Activated naive CD4-positive, alpha-beta T cell treated with anti-CD3 and anti-CD28 coated beads for 36 hours (primary cell): ENCODE measurements at regions of chr7 and their contacts with region 1.

Region 1: DNA sequence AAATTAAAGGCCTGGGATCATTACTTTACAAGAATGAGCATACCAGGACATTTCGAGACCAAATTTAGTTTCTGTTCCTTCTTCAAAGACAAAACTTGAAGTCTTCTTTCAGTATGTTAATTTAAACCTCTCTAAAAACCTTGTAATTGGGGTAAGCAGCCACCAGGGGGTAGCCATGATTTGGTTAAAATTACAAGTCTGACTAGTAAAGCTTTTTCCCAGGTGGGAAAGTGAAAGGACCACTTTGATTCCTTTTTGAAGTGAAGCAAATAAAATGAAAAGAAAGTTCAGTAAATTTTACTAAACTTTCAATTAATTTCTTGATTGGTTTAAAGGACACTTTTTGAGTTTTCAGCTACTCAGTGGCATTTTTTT is 294.3 kb downstream of the BBS9 start:
- DNase-seq: peak; percentile 39
- H3K4me3 Mint-ChIP-seq: no peak overlapping the region
- H3K27ac Mint-ChIP-seq: no peak overlapping the region
- H3K4me1 Mint-ChIP-seq: no peaks in the 10 kb centered on the region
- H3K27me3 Mint-ChIP-seq: no peaks in the 10 kb centered on the region

Region 2: DNA sequence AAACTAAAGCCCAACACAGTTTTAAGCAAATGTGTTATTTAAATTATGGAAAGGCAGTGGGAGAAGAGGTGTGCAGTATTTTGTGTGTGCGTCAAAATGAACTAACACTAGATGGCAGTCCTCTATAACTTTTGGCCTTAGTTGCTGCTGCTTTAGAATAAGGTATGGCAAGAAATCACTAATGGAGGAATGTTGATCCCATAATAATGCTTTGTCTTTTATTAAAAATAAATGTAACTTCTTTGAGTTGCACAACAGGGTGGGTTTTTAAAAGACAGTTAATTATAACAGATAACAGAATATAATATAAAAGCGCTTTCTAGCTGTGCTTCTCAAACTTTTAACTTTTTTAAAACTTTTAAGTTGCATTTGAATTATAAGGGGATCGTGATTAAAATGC is 237.8 kb before region 1 on chr7:
- CTCF ChIA-PET with region 1: no interaction called
- intact Hi-C with region 1: loop called (anchors 1 kb)
- DNase-seq: peak; percentile 15
- H3K4me3 Mint-ChIP-seq: no peak overlapping the region
- H3K27ac Mint-ChIP-seq: no peak overlapping the region
- H3K4me1 Mint-ChIP-seq: peaks cover 8% of the 10 kb centered on the region
- H3K27me3 Mint-ChIP-seq: no peaks in the 10 kb centered on the region

Region 3: GRCh38 chr7:33243319-33243881 is 180.2 kb before region 1 on chr7:
- CTCF ChIA-PET with region 1: no interaction called
- intact Hi-C with region 1: loop called (anchors 5 kb)
- DNase-seq: no peak
- H3K4me3 Mint-ChIP-seq: no peak overlapping the region
- H3K27ac Mint-ChIP-seq: no peak overlapping the region
- H3K4me1 Mint-ChIP-seq: no peaks in the 10 kb centered on the region
- H3K27me3 Mint-ChIP-seq: no peaks in the 10 kb centered on the region

Region 4: DNA sequence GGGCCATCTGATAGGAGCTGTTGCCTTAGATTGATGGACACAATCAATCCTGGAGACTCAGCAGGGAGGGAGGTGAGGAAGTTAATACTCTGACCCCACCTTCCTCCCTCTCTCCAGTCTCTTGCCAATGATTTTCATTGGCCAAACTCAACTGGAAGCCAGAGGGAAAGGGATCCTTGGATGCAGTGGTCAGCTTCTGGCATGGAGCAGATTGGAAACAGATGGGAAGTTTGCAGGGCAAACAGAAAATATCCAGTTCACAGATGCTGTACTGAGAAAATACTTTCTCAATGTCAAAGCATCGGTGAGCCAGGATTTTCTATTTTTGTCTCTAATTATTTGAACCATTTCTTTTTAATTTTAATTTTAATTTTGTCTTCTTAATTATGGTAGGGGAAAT is 123.5 kb before region 1 on chr7:
- CTCF ChIA-PET with region 1: no interaction called
- intact Hi-C with region 1: no loop called
- DNase-seq: no peak
- H3K4me3 Mint-ChIP-seq: no peak overlapping the region
- H3K27ac Mint-ChIP-seq: no peak overlapping the region
- H3K4me1 Mint-ChIP-seq: no peaks in the 10 kb centered on the region
- H3K27me3 Mint-ChIP-seq: no peaks in the 10 kb centered on the region

Region 5: DNA sequence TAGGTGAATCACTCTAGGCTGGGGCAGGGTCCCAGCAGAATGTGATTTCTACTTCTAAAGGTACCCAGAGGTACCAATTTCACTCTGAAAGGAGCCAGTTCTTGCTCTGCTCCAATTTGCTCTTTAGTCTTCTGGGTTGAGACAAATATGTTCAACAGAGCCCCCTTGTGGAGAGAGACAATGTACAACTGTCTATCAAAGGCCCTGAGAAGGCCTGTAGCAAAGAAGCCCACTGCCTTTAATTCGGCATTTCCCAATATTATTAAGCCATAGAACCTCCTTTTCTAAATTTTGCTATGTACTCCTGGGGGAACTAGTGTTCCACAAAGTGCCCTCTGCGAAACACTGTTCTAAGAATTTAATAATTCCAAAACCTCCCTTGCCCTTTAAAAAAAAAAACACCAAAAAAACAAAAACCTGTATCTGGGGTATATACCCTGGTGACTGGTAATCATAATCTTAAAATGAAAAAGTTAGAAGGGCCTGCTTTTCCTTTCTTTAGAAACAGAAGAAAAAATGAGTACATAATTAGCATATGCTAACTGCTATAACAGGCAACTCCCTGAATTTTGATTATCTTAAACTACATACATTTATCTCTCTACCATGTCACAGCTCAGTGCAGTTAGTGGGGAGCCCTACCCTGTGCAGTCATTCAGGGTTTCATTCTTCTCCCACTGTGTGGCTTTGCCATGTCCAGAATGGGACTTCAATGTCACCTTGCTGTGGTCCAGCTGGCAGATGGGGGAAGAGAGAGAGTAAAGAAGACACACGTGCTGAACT is 320.9 kb after region 1 on chr7:
- CTCF ChIA-PET with region 1: no interaction called
- intact Hi-C with region 1: loop called (anchors 5 kb)
- DNase-seq: no peak
- H3K4me3 Mint-ChIP-seq: no peak overlapping the region
- H3K27ac Mint-ChIP-seq: no peak overlapping the region
- H3K4me1 Mint-ChIP-seq: no peaks in the 10 kb centered on the region
- H3K27me3 Mint-ChIP-seq: no peaks in the 10 kb centered on the region

Region 6: DNA sequence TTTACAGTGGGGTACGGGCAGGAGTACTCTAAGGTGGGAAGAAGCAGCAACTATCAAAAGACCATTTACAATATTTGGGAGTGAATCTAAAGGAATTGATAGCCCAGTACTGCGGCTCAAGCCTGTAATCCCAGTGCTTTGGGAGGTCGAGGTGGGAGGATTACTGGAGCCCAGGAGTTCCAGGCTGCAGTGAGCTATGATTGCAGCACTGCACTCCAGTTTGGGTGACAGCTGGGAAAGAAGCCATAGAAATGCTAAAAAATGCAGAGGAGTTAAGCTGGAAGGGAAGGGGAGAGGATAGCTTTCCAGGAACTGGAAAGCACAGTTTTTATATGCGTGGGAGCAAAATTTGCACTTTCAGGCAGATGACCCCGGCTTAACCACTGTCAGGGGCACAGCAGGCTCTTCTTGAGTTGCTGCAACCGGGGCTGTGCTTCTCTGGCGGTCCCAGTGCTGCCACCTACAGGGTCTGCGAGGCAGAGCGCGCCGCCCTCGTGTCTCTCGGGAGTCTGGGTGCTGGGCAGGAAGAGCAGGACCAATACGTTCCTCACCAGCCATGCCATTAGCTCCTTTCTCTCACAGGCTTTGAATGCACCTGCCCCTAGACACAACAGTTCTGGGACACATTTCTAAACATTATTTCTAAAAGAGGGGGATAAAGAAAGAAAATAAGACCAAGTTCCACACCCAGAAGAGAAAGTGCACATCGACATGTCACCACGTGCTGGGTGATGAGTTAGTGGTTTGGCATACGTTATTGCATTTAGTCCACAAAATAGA is 471.6 kb after region 1 on chr7:
- CTCF ChIA-PET with region 1: interaction called, 3 read pairs
- intact Hi-C with region 1: loop called (anchors 5 kb)
- DNase-seq: peak; percentile 87
- H3K4me3 Mint-ChIP-seq: no peak overlapping the region
- H3K27ac Mint-ChIP-seq: no peak overlapping the region
- H3K4me1 Mint-ChIP-seq: peaks cover 2% of the 10 kb centered on the region
- H3K27me3 Mint-ChIP-seq: peaks cover 33% of the 10 kb centered on the region